ENCODE measurements at regions of chr7 and their contacts with region 1.

Region 1: GRCh38 chr7:35985126-35985754 is 167.8 kb upstream of the EEPD1 start:
- DNase-seq: peak; percentile 90

Region 2: GRCh38 chr7:35681231-35682029 is 303.8 kb before region 1 on chr7:
- intact Hi-C with region 1: no loop called
- DNase-seq: no peak

Region 3: DNA sequence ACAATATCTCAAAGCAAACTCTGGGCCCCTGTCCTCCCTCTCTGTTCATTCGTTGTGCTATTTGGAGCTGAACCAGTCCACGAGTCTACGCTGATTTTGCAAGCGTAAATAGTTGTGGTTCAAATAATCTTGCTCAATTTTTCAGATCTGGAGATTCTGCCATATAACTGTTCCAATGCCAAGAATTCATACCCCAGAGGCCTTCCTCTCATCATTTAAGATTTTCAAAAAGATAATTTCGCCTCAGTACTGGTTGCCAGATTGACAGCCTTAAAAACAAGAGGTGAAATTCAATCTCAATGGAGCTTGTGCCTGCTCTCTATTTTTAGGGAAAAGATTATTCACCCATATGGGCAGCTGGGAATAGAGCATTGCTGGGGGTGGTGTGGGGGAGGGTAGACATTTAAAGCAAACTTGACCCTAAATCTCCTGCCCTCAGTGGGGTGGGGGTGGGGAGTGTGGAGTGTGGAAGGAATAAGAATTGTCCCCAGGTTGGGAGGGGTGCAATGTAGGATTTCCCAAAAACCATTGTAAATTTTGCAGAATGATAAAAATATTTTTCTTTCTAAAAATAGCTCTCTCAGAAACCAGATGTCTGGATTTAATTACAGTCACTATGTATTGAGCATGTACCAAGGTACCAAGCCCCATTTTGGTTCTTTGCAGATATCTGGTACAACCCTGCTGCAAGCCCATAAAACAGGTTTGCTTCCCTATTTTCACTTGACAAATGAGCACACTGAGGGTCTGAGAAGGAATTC is 63.1 kb after region 1 on chr7:
- intact Hi-C with region 1: no loop called
- DNase-seq: no peak

Region 4: DNA sequence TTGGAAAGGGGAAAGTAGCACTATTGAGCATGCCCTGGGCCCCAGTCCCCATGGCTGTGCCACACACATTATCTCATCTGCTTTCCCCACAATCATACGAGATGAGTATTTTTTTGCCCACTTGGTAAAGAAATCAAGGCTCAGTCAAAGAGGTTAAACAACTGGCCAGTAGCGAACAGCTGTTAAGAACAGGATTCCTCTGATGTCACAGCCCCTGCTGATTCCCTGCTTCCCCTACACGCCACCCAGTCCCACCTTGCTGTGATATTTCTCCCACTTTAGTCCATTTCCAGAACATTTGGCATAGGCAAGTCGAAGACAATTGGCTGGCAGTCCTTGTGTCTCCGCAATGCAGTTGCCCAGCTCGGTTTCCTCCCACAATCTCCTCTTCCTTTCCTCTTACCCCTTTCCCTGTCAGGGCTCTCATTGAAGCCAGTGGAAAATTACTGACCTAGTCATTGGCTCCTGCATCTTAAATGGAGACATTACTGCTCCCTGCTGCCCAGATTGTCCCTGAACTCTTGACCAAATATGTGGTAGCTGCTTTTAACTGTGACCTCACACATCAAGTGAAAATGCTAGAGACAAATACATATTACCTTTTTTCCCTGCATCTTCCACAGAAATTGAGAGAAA is 111.3 kb after region 1 on chr7:
- intact Hi-C with region 1: loop called (anchors 2 kb)
- DNase-seq: no peak

Region 5: DNA sequence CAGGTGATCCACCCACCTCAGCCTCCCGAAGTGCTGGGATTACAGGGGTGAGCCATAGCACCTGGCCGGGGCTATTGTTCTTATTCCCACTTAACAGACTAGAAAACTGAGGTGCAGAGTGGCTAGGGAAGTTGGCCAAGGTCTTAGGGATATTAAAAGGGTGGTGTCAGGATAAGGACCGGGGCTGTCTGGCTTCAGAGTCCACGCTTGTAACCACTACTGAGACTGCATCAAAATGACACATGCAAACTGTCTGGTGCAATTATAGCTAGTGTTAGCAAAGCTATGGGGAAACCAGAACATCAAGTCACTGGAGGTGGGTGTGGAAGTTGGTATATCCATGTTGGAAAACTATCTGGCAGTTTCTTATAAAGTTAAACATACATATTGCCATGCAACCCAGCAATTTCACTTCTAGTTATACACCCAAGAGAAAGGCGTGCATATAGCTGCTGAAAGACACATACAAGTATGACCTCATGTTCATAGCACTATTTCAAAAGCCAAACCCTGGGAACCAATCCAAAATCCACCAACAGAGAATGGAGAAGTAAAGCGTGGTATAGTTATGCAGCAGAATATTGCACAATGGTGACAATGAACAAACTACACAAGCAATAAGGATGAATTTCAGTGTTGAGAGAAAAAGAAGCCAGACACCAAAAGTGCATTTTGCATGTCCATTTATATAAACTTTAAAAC is 133.9 kb after region 1 on chr7:
- intact Hi-C with region 1: no loop called
- DNase-seq: no peak

Region 6: GRCh38 chr7:36216063-36216684 is 230.9 kb after region 1 on chr7:
- intact Hi-C with region 1: no loop called
- DNase-seq: no peak

Region 7: GRCh38 chr7:36318116-36318515 is 332.9 kb after region 1 on chr7:
- intact Hi-C with region 1: loop called (anchors 2 kb)
- DNase-seq: no peak

Measured in cardiac septum (tissue), 1 donor.